GM12878 (cell line): ENCODE measurements at regions of chr1 and their contacts with region 1.

Region 1: GRCh38 chr1:166039436-166040201 is 127.2 kb downstream of the FAM78B start:
- DNase-seq: no peak
- ATAC-seq: no peak
- H3K4me3 ChIP-seq: no peak overlapping the region
- H3K27ac ChIP-seq: no peak overlapping the region
- H3K4me1 ChIP-seq: no peaks in the 10 kb centered on the region
- H3K27me3 ChIP-seq: no peaks in the 10 kb centered on the region
- CTCF ChIP-seq: no peak
- EP300 ChIP-seq: no peak
- POLR2A ChIP-seq: no peak
- RAD21 ChIP-seq: no peak

Region 2: DNA sequence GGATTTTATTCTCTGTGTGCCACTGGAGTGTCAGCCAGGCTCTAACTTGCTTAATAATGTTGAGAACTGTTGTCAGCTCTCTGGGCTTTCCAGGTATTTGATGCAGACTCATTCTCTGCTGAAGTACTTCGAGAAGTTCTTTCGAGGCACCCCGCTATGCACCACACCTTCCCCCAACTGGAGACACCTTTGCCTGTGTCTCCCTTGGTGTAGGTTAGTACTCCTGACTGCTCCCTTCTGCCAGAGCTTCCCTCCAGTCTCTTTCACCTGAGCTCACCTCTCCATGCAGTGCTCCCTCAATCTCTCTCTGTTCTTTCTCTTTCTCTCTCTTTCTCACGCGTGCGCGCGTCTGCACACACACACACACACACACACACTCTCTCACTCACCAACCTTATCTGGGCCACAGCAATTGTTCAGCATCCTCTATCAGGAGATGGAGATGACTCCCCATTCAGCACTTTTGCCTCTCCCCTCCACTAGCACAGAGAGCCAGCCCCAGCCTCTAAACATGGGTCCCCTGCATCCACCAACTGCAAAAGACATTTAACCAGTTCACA is 422.6 kb before region 1 on chr1:
- CTCF ChIA-PET with region 1: no interaction called
- POLR2A ChIA-PET with region 1: no interaction called
- RAD21 ChIA-PET with region 1: no interaction called
- SMC1A ChIA-PET with region 1: no interaction called
- in situ Hi-C with region 1: no loop called
- intact Hi-C with region 1: no loop called
- DNase-seq: no peak
- ATAC-seq: no peak
- H3K4me3 ChIP-seq: no peak overlapping the region
- H3K27ac ChIP-seq: no peak overlapping the region
- H3K4me1 ChIP-seq: no peaks in the 10 kb centered on the region
- H3K27me3 ChIP-seq: no peaks in the 10 kb centered on the region
- CTCF ChIP-seq: no peak
- EP300 ChIP-seq: no peak
- POLR2A ChIP-seq: no peak
- RAD21 ChIP-seq: no peak

Region 3: DNA sequence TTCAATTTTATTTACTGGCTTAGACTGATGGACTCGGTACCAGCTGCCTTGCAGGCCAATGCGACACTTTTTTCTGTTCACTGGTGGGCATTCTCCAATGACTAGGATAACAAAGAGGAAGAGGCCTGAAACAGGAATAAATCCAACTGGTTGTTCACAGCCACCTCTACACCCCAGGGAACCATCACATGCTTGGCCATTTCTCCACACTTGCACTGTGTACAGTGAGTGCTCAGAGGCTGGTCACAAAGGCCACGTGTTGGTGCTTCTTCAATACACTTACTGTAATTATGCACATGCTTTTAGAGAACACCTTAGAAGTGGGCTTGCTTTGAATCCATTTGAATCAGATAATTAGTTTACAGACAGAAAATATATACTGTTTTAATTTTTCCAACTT is 13.8 kb after region 1 on chr1:
- CTCF ChIA-PET with region 1: no interaction called
- POLR2A ChIA-PET with region 1: no interaction called
- RAD21 ChIA-PET with region 1: no interaction called
- SMC1A ChIA-PET with region 1: no interaction called
- in situ Hi-C with region 1: no loop called
- intact Hi-C with region 1: loop called (anchors 1 kb)
- DNase-seq: no peak
- ATAC-seq: no peak
- H3K4me3 ChIP-seq: no peak overlapping the region
- H3K27ac ChIP-seq: no peak overlapping the region
- H3K4me1 ChIP-seq: no peaks in the 10 kb centered on the region
- H3K27me3 ChIP-seq: no peaks in the 10 kb centered on the region; a peak in 1 of 4 replicates
- CTCF ChIP-seq: no peak
- EP300 ChIP-seq: no peak
- POLR2A ChIP-seq: no peak
- RAD21 ChIP-seq: no peak

Region 4: DNA sequence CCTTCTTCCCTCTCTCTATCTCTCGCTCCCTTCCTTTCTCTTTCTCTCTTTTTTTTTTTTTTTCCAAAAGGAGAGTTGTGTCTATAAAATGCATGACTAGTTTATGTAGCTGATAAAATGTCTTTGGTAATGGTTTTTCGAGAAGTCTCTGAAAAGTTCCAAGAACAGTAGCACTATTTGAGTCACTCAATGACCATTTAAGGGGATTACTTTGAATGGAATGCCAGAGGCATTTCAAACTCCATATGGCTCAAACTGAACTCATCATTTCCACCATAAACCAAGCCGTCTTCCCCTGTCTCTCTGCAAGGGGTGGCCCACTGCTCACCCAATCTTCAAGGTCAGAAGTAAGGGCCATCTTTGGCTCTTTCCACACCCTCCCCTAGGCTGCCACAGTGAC is 33.9 kb after region 1 on chr1:
- CTCF ChIA-PET with region 1: no interaction called
- POLR2A ChIA-PET with region 1: no interaction called
- RAD21 ChIA-PET with region 1: no interaction called
- SMC1A ChIA-PET with region 1: no interaction called
- in situ Hi-C with region 1: no loop called
- intact Hi-C with region 1: no loop called
- DNase-seq: no peak
- ATAC-seq: no peak
- H3K4me3 ChIP-seq: no peak overlapping the region
- H3K27ac ChIP-seq: no peak overlapping the region
- H3K4me1 ChIP-seq: no peaks in the 10 kb centered on the region
- H3K27me3 ChIP-seq: no peaks in the 10 kb centered on the region
- CTCF ChIP-seq: no peak
- EP300 ChIP-seq: no peak
- POLR2A ChIP-seq: no peak
- RAD21 ChIP-seq: no peak

Region 5: GRCh38 chr1:166111430-166111829 is 71.8 kb after region 1 on chr1:
- CTCF ChIA-PET with region 1: no interaction called
- POLR2A ChIA-PET with region 1: no interaction called
- RAD21 ChIA-PET with region 1: no interaction called
- SMC1A ChIA-PET with region 1: no interaction called
- in situ Hi-C with region 1: no loop called
- intact Hi-C with region 1: no loop called
- DNase-seq: no peak
- ATAC-seq: peak; percentile 42; the same call in 2 of the 3 replicates
- H3K4me3 ChIP-seq: no peak overlapping the region
- H3K27ac ChIP-seq: no peak overlapping the region
- H3K4me1 ChIP-seq: no peaks in the 10 kb centered on the region
- H3K27me3 ChIP-seq: no peaks in the 10 kb centered on the region
- CTCF ChIP-seq: no peak
- EP300 ChIP-seq: no peak
- POLR2A ChIP-seq: no peak
- RAD21 ChIP-seq: no peak

Region 6: DNA sequence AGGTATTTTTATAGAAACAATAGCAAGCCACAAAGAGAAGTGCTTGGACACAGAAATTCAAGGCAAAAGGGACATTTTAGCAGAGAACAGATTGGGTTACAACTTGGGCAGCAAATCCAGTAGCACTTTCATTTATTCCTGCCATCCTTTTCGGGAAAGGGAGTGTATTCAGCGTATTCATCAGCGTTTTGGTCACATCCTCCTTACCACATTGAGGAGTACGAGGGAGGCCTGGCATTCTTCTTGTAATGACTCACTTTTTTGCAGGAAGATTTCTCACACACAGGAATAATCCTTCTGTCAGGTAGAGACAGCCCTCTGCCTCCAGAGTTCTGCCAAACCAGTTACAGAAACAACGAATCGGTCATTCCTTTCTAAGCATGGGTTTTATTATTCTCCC is 145.3 kb after region 1 on chr1:
- CTCF ChIA-PET with region 1: no interaction called
- POLR2A ChIA-PET with region 1: no interaction called
- RAD21 ChIA-PET with region 1: no interaction called
- SMC1A ChIA-PET with region 1: no interaction called
- in situ Hi-C with region 1: no loop called
- intact Hi-C with region 1: no loop called
- DNase-seq: no peak
- ATAC-seq: no peak
- H3K4me3 ChIP-seq: no peak overlapping the region
- H3K27ac ChIP-seq: no peak overlapping the region
- H3K4me1 ChIP-seq: no peaks in the 10 kb centered on the region
- H3K27me3 ChIP-seq: no peaks in the 10 kb centered on the region
- CTCF ChIP-seq: no peak
- EP300 ChIP-seq: no peak
- POLR2A ChIP-seq: no peak
- RAD21 ChIP-seq: no peak